IMR-90 (cell line): ENCODE measurements at regions of chr17 and their contacts with region 1.

Region 1: GRCh38 chr17:2386400-2387085 is 14.3 kb downstream of the MNT start:
- DNase-seq: no peak
- ATAC-seq: no peak
- H3K4me3 ChIP-seq: no peak overlapping the region
- H3K27ac ChIP-seq: no peak overlapping the region
- H3K4me1 ChIP-seq: peaks cover 3% of the 10 kb centered on the region
- H3K27me3 ChIP-seq: no peaks in the 10 kb centered on the region
- CTCF ChIP-seq: no peak
- POLR2A ChIP-seq: no peak
- RAD21 ChIP-seq: no peak

Region 2: DNA sequence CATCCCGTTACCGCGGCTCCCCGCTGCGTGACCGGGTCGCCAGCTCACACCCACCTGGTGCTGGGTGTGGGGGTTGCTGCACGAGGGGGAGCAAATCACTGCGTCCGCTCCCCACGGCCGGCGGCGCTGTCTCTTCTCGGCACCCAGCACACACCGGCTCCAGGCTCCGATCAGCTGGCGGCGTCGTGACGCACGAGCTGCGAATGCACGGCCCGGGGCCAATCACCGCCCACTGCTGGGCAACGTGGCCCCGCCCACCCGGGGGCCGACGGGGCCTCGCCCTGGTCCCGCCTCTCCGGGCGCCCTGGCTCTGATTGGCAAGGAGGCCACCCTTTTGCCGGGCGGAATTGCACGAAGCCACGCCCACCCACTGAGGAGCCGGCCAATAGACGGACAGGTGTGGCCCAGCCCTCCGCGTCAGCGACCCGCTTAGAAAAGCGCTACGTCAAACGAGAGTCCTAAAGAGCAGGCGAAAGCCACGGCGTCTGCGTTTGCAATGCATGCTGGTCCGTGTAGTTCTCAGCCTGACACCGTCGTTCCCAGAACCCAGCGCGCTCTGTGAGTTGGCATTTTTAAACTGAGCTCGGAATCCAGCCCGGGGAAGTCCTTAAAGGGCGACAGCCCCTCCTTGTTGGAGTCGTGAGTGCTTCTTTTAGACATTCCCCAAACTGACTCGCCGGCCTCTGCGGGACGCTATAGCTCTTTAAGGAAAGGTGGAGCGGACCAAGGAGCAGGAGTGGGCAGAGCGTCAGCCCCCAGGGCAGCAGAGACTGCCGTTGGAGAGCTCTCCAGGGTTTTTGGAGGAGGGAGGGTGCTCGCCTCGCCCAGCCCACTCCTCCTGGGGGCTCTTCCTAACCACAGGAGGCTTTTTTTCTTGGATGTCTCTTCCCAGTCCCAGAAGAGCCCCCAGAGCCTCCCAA is 670.2 kb before region 1 on chr17:
- CTCF ChIA-PET with region 1: no interaction called
- POLR2A ChIA-PET with region 1: no interaction called
- dilution Hi-C with region 1: no loop called
- in situ Hi-C with region 1: no loop called
- intact Hi-C with region 1: no loop called
- DNase-seq: peak; percentile 100
- ATAC-seq: peak; percentile 65
- H3K4me3 ChIP-seq: peak overlapping the region; percentile 78
- H3K27ac ChIP-seq: peak overlapping the region; percentile 98
- H3K4me1 ChIP-seq: peaks cover 21% of the 10 kb centered on the region
- H3K27me3 ChIP-seq: no peaks in the 10 kb centered on the region
- CTCF ChIP-seq: peak; percentile 39
- POLR2A ChIP-seq: peak; percentile 99
- RAD21 ChIP-seq: peak; percentile 40

Region 3: GRCh38 chr17:2401426-2402221 is 15.1 kb after region 1 on chr17:
- CTCF ChIA-PET with region 1: interaction called, 10 read pairs
- POLR2A ChIA-PET with region 1: interaction called, 3 read pairs
- dilution Hi-C with region 1: no loop called
- in situ Hi-C with region 1: no loop called
- intact Hi-C with region 1: loop called (anchors 1 kb)
- DNase-seq: peak; percentile 99
- ATAC-seq: peak; percentile 53
- H3K4me3 ChIP-seq: peak overlapping the region; percentile 83
- H3K27ac ChIP-seq: peak overlapping the region; percentile 93
- H3K4me1 ChIP-seq: peaks cover 42% of the 10 kb centered on the region
- H3K27me3 ChIP-seq: no peaks in the 10 kb centered on the region
- CTCF ChIP-seq: no peak
- POLR2A ChIP-seq: peak; percentile 72
- RAD21 ChIP-seq: no peak

Region 4: DNA sequence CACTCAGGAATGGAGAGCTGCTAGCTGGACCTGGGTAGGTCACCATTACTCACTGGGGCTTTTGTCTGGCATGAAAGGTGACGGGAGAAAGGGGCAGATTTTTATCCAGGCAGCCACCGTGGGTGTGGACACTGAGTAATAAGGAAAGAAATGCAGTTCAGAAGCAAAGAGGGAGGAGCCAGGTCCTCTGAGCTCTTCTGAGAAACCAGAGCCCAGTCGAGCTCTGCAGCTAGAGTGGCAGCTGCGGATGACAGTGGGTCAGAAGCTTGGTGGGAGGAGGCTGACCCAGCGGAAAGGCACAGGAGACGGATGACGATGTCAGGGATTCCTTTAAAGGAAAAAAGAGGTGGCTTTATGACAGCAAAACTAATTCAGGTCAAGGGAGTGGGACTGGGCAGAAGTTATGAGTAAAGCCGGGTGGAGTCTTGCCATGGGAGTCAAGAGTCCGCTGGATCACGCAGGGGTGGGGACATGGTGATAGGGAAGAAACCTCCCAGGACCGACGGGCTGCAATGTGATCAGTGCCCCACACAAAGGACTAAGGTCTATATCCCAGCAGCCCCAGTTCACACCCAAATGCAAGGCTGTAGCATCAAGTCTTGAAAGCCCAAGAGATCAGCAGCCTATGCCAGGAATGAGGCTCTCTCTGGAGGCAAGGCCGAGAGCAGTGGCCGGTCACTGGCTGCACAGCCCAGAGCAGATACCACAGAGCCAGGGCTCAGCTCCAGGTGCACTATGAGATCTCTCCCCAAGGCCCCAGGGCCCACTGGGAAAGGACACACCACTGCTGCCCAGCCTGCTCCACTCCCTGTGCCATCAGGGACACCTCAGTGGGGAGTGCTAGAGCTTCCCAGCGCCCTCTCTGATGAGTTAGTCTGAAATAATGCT is 20.6 kb after region 1 on chr17:
- CTCF ChIA-PET with region 1: interaction called, 10 read pairs
- POLR2A ChIA-PET with region 1: no interaction called
- dilution Hi-C with region 1: no loop called
- in situ Hi-C with region 1: no loop called
- intact Hi-C with region 1: no loop called
- DNase-seq: peak; percentile 92
- ATAC-seq: peak; percentile 83
- H3K4me3 ChIP-seq: no peak overlapping the region
- H3K27ac ChIP-seq: peak overlapping the region; percentile 86
- H3K4me1 ChIP-seq: peaks cover 33% of the 10 kb centered on the region
- H3K27me3 ChIP-seq: no peaks in the 10 kb centered on the region
- CTCF ChIP-seq: no peak
- POLR2A ChIP-seq: no peak; the same call in 1 of the 2 replicates
- RAD21 ChIP-seq: no peak

Region 5: DNA sequence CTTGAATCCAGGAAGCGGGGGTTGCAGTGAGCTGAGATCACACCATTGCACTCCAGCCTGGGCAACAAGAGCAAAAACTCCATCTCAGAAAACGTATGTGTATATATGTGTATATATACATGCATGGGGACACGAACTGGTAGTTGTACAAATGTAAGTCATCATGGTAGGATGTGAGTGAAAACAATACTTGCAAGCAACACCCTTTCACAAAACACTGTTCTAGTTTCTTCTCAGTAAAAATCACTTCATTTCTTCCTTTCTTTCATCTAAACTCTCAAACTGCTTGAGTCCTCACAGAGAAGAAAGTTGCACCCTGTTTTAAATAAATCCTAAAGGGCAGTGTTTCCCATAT is 73.4 kb after region 1 on chr17:
- CTCF ChIA-PET with region 1: interaction called, 4 read pairs
- POLR2A ChIA-PET with region 1: no interaction called
- dilution Hi-C with region 1: no loop called
- in situ Hi-C with region 1: no loop called
- intact Hi-C with region 1: loop called (anchors 2 kb)
- DNase-seq: no peak
- ATAC-seq: no peak
- H3K4me3 ChIP-seq: no peak overlapping the region
- H3K27ac ChIP-seq: peak overlapping the region; percentile 69; the same call in 1 of the 2 replicates
- H3K4me1 ChIP-seq: peaks cover 8% of the 10 kb centered on the region
- H3K27me3 ChIP-seq: no peaks in the 10 kb centered on the region
- CTCF ChIP-seq: no peak
- POLR2A ChIP-seq: no peak
- RAD21 ChIP-seq: no peak